Activated CD8-positive, alpha-beta T cell treated with anti-CD3 and anti-CD28 coated beads for 36 hours (primary cell): ENCODE measurements at regions of chr10 and their contacts with region 1.

Region 1: GRCh38 chr10:109191341-109191740 is 732.0 kb downstream of the XPNPEP1 start:
- DNase-seq: no peak
- ATAC-seq: no peak
- H3K4me3 Mint-ChIP-seq: no peak overlapping the region
- H3K27ac Mint-ChIP-seq: no peak overlapping the region
- H3K4me1 Mint-ChIP-seq: no peaks in the 10 kb centered on the region
- H3K27me3 Mint-ChIP-seq: no peaks in the 10 kb centered on the region
- CTCF ChIP-seq: no peak

Region 2: GRCh38 chr10:109205929-109206585 is 14.7 kb after region 1 on chr10:
- CTCF ChIA-PET with region 1: no interaction called
- POLR2A ChIA-PET with region 1: no interaction called
- intact Hi-C with region 1: no loop called
- DNase-seq: no peak
- ATAC-seq: no peak
- H3K4me3 Mint-ChIP-seq: no peak overlapping the region
- H3K27ac Mint-ChIP-seq: no peak overlapping the region
- H3K4me1 Mint-ChIP-seq: no peaks in the 10 kb centered on the region
- H3K27me3 Mint-ChIP-seq: no peaks in the 10 kb centered on the region
- CTCF ChIP-seq: no peak

Region 3: GRCh38 chr10:109245821-109246220 is 54.5 kb after region 1 on chr10:
- CTCF ChIA-PET with region 1: no interaction called
- POLR2A ChIA-PET with region 1: no interaction called
- intact Hi-C with region 1: loop called (anchors 2 kb)
- DNase-seq: no peak
- ATAC-seq: no peak
- H3K4me3 Mint-ChIP-seq: no peak overlapping the region
- H3K27ac Mint-ChIP-seq: no peak overlapping the region
- H3K4me1 Mint-ChIP-seq: no peaks in the 10 kb centered on the region
- H3K27me3 Mint-ChIP-seq: no peaks in the 10 kb centered on the region
- CTCF ChIP-seq: no peak